ENCODE measurements at regions of chr16 and their contacts with region 1.

Region 1: GRCh38 chr16:22077700-22078313 is 14.5 kb upstream of the VWA3A start:
- DNase-seq: peak; percentile 79
- H3K4me3 Mint-ChIP-seq: no peak overlapping the region
- H3K27ac Mint-ChIP-seq: no peak overlapping the region
- H3K4me1 Mint-ChIP-seq: peaks cover 4% of the 10 kb centered on the region
- H3K27me3 Mint-ChIP-seq: peaks cover 2% of the 10 kb centered on the region

Region 2: GRCh38 chr16:22001591-22001990 is 76.2 kb before region 1 on chr16:
- CTCF ChIA-PET with region 1: interaction called, 24 read pairs
- POLR2A ChIA-PET with region 1: interaction called, 5 read pairs
- DNase-seq: no peak
- H3K4me3 Mint-ChIP-seq: no peak overlapping the region
- H3K27ac Mint-ChIP-seq: no peak overlapping the region
- H3K4me1 Mint-ChIP-seq: peaks cover 10% of the 10 kb centered on the region
- H3K27me3 Mint-ChIP-seq: no peaks in the 10 kb centered on the region

Region 3: GRCh38 chr16:22007509-22008214 is 70.1 kb before region 1 on chr16 and contains the start of gene MOSMO:
- CTCF ChIA-PET with region 1: interaction called, 24 read pairs
- POLR2A ChIA-PET with region 1: interaction called, 5 read pairs
- DNase-seq: peak; percentile 68
- H3K4me3 Mint-ChIP-seq: peak within 1 kb of the TSS; percentile 82
- H3K27ac Mint-ChIP-seq: peak within 1 kb of the TSS; percentile 90
- H3K4me1 Mint-ChIP-seq: peaks cover 28% of the 10 kb centered on the region
- H3K27me3 Mint-ChIP-seq: no peaks in the 10 kb centered on the region
- total RNA-seq, gene MOSMO: 10.7 to 11.9 TPM

Region 4: DNA sequence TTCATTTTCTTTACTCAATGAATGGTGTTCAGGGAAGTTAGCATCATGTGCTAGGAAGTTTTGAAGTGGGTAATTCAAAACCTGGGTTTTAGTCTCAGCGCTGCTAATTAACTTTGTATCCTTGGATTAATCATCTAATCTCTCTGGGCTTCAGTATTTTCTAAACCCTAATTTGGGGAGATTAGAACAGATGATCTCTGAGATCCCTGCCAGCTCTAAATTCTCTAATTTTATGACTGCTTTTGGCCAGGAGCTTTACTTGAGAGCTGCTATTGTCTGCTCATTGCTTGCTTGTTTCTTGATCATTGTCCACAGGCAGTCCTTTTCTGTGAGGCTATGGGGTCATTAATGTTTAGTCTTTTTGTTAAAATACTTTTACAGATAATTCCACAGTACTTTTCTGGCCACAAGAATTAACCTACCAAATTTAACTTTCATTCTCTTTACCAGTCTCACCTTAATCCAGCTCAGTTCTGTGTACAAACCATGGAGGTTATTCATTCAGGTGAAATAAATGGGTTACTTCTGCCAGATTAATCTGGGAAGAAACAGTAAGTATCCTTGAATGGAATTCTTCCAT is 13.8 kb before region 1 on chr16:
- CTCF ChIA-PET with region 1: interaction called, 11 read pairs
- POLR2A ChIA-PET with region 1: interaction called, 4 read pairs
- DNase-seq: no peak
- H3K4me3 Mint-ChIP-seq: no peak overlapping the region
- H3K27ac Mint-ChIP-seq: no peak overlapping the region
- H3K4me1 Mint-ChIP-seq: no peaks in the 10 kb centered on the region
- H3K27me3 Mint-ChIP-seq: no peaks in the 10 kb centered on the region

Region 5: DNA sequence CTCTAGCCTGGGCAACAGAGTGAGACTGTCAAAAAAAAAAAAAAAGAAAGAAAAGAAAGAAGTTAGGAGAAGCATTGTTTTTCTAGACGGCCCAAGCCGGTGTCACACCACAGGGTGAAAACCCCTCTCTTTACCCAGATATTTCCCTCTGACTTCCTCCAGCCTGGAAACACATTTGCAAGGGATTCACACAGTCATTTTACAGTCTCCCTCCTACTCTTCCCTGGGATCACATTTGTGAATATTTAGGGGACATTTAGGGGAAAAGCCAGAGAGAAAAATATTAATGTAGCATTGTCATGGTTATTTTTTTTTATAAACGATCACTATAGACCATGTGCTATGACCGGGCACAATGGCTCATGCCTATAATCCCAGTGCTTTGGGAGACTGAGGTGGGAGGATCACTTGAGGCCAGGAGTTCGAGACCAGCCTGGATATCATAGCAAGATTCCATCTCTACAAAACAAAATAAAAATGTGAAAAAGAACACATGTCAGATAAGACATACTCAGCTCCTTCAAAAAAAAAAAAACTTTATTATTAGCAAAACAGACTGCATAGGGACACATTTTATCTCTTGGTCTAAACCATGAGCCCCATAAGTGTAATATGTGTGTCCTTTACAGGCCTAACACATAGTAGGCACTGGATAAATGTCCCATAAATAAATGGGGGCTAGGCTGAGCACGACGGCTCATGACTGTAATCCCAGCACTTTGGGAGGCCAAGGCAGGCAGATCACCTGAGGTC is 73.6 kb after region 1 on chr16:
- CTCF ChIA-PET with region 1: no interaction called
- POLR2A ChIA-PET with region 1: no interaction called
- DNase-seq: no peak
- H3K4me3 Mint-ChIP-seq: no peak overlapping the region
- H3K27ac Mint-ChIP-seq: no peak overlapping the region
- H3K4me1 Mint-ChIP-seq: no peaks in the 10 kb centered on the region
- H3K27me3 Mint-ChIP-seq: no peaks in the 10 kb centered on the region

Region 6: GRCh38 chr16:22165508-22166285 is 87.9 kb after region 1 on chr16:
- CTCF ChIA-PET with region 1: no interaction called
- POLR2A ChIA-PET with region 1: no interaction called
- DNase-seq: no peak
- H3K4me3 Mint-ChIP-seq: no peak overlapping the region
- H3K27ac Mint-ChIP-seq: no peak overlapping the region
- H3K4me1 Mint-ChIP-seq: peaks cover 5% of the 10 kb centered on the region
- H3K27me3 Mint-ChIP-seq: peaks cover 9% of the 10 kb centered on the region

Measured in activated CD4-positive, alpha-beta T cell treated with anti-CD3 and anti-CD28 coated beads, Interleukin-2, amount 10 ng/mL, durations not matched to agents 7 days and 5 days (primary cell).